OCI-LY7 (cell line): ENCODE measurements at regions of chr1 and their contacts with region 1.

Region 1: DNA sequence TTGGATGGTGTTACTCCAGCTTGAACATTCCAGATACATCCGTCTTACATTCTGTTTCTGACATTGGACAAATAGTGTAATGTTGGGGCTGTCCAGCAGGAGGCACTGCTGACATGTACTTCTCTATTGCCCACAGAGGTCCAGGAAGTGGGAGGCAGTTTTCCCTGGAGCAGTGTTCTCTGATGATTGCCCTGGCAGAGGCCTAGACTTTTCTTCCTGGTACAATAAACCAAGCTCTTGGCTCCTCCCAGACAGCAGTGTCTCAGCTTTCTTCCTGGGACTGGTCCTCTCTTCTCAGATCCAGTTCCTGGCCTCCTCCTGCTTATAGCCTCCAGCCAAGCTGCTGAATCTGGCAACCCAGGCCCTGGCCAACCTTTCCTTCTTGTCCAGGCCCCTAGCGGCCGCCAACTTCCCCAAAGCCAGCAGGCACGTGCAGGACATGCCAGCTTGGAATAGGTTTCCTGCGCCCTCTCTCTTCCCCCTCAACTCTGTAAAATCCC is 14.9 kb upstream of the IFNLR1 start:
- DNase-seq: peak; percentile 63
- H3K4me3 ChIP-seq: peak overlapping the region; percentile 72
- H3K27ac ChIP-seq: peak overlapping the region; percentile 72
- H3K4me1 ChIP-seq: peaks cover 86% of the 10 kb centered on the region
- CTCF ChIP-seq: peak; percentile 95

Region 2: GRCh38 chr1:24150234-24151174 is 51.5 kb before region 1 on chr1:
- CTCF ChIA-PET with region 1: interaction called, 14 read pairs
- POLR2A ChIA-PET with region 1: interaction called, 3 read pairs
- intact Hi-C with region 1: loop called (anchors 1 kb)
- DNase-seq: peak; percentile 82
- H3K4me3 ChIP-seq: peak overlapping the region; percentile 47
- H3K27ac ChIP-seq: no peak overlapping the region
- H3K4me1 ChIP-seq: peaks cover 36% of the 10 kb centered on the region
- CTCF ChIP-seq: peak; percentile 88

Region 3: DNA sequence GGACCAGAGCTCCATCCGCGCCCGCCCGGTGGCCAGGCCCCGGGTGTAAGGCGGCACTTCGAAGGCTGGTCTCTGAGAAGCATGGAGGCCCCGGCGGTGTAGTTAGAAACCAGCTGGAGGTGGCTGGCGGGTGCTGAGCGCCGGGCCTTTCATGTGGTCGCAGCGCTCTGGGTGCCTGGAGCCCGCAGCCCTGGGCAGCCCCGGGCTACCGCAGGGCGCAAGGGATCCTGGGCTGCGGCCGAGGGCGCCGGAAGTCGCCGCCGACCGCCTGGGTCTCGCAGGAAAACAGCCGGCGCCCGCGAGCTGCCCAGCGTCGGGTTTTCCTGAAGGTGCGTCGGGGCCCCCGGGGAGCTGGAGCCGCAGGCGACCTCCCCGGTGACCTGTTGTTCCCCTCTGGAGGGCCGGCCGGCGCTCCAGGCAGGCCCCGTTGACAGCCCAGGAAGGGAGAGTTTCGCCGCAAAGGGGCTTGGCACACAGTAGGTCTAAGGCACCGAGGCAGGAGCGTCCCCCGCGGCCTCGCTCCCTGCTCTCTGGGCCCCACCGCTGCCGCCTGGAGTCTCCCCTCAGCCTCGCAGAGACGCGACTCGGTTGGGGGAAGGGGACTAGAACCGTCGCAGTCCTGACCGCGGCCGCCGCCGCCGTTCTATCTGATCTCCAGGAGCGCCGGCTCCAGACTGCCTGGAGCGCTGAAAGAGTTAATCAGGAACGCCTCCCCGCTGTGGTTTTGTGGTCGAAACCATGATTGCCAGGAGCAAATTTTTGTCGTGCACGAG is 119.9 kb after region 1 on chr1:
- CTCF ChIA-PET with region 1: no interaction called
- POLR2A ChIA-PET with region 1: interaction called, 4 read pairs
- intact Hi-C with region 1: loop called (anchors 5 kb)
- DNase-seq: peak; percentile 79
- H3K4me3 ChIP-seq: peak overlapping the region; percentile 67
- H3K27ac ChIP-seq: no peak overlapping the region
- H3K4me1 ChIP-seq: peaks cover 42% of the 10 kb centered on the region
- CTCF ChIP-seq: no peak

Region 4: DNA sequence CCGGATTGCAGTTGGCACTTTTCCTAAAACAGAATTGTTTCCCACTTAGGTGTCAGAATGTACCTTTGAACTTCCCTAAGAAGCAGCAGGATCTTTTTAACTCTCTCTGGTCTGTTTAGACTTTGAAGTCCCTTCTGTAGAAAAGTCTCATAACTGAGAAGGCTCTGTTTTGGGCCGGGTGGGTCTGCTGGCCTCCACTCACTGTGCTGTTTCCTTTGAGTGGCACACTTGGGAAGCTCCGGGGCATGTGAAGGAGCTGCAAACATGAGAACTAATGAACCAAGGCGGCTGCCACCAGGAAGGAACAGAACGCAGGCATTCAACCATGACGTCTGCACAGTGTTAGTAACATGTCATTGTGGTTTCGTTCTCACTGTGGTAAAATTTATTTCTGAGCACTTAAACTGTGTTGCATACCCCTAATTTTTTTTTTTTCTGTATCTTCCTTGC is 334.4 kb after region 1 on chr1:
- CTCF ChIA-PET with region 1: no interaction called
- POLR2A ChIA-PET with region 1: no interaction called
- intact Hi-C with region 1: loop called (anchors 5 kb)
- DNase-seq: peak; percentile 87
- H3K4me3 ChIP-seq: peak overlapping the region; percentile 65
- H3K27ac ChIP-seq: peak overlapping the region; percentile 89
- H3K4me1 ChIP-seq: peaks cover 82% of the 10 kb centered on the region
- CTCF ChIP-seq: no peak

Region 5: GRCh38 chr1:25022361-25023189 is 820.6 kb after region 1 on chr1:
- CTCF ChIA-PET with region 1: no interaction called
- POLR2A ChIA-PET with region 1: no interaction called
- intact Hi-C with region 1: no loop called
- DNase-seq: peak; percentile 86
- H3K4me3 ChIP-seq: peak overlapping the region; percentile 55
- H3K27ac ChIP-seq: peak overlapping the region; percentile 80
- H3K4me1 ChIP-seq: peaks cover 68% of the 10 kb centered on the region
- CTCF ChIP-seq: no peak